AG04450 (cell line): ENCODE measurements at regions of chr11 and their contacts with region 1.

Region 1: GRCh38 chr11:72519220-72519881 is 85.0 kb upstream of the CLPB start:
- DNase-seq: no peak
- H3K4me3 ChIP-seq: peak overlapping the region; percentile 40
- H3K27ac ChIP-seq: no peak overlapping the region
- H3K27me3 ChIP-seq: peaks cover 25% of the 10 kb centered on the region
- CTCF ChIP-seq: no peak

Region 2: GRCh38 chr11:72091005-72091691 is 428.2 kb before region 1 on chr11:
- CTCF ChIA-PET with region 1: no interaction called
- POLR2A ChIA-PET with region 1: no interaction called
- DNase-seq: peak; percentile 20
- H3K4me3 ChIP-seq: no peak overlapping the region
- H3K27ac ChIP-seq: no peak overlapping the region
- H3K27me3 ChIP-seq: no peaks in the 10 kb centered on the region
- CTCF ChIP-seq: peak; percentile 90

Region 3: GRCh38 chr11:72534565-72535547 is 15.5 kb after region 1 on chr11:
- CTCF ChIA-PET with region 1: interaction called, 12 read pairs
- POLR2A ChIA-PET with region 1: no interaction called
- DNase-seq: no peak
- H3K4me3 ChIP-seq: no peak overlapping the region
- H3K27ac ChIP-seq: no peak overlapping the region
- H3K27me3 ChIP-seq: peaks cover 24% of the 10 kb centered on the region
- CTCF ChIP-seq: peak; percentile 12; the same call in 1 of the 2 replicates

Region 4: GRCh38 chr11:72553706-72554105 is 34.4 kb after region 1 on chr11:
- CTCF ChIA-PET with region 1: no interaction called
- POLR2A ChIA-PET with region 1: no interaction called
- DNase-seq: no peak
- H3K4me3 ChIP-seq: no peak overlapping the region
- H3K27ac ChIP-seq: no peak overlapping the region
- H3K27me3 ChIP-seq: peaks cover 23% of the 10 kb centered on the region
- CTCF ChIP-seq: no peak